ENCODE measurements at regions of chr11 and their contacts with region 1.

Region 1: DNA sequence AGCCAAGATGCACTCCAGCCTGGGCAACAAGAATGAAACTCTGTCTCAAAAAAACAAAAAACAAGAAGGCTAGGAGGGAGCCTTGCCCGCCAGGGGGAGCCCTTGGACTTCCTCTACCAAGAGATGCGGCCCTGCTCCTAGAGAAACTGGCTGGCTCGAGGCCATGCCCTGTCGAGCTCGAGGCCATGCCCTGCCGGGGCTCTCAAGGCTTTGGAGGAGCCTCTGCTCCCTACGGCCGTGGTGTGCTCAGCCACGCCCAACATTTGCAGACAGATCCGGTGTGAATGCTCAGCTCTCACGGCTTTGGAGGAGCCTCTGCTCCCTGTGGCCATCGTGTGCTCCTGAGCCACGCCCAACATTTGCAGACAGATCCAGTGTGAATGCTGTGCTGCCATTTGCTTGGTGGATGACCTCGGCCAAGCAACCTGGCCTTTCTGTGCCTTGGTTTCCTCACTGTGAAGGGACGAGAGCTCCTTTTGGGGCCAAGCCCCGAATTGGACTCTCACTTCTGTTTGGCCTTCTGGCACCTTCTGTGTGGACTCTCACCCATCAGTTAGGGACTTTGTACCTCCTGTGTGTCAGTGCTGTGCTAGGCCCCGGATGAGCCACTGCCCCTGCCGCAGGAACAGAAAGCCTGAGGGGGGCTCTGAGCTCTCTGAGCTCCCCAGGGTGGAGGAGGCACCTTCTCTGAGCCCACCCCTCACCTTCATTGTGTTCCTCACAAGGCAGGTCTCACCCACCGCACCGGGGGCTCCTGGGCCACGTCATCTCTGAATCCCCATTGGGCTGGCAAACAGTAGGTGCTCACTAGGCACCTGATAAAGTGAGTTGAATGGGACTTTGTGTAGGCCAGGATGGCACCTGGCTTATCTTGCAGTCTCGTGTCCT is 14.1 kb downstream of the C11orf24 start:
- DNase-seq: peak; percentile 93
- H3K4me3 ChIP-seq: no peak overlapping the region
- H3K27ac ChIP-seq: no peak overlapping the region
- H3K4me1 ChIP-seq: peaks cover 6% of the 10 kb centered on the region
- CTCF ChIP-seq: peak; percentile 87

Region 2: DNA sequence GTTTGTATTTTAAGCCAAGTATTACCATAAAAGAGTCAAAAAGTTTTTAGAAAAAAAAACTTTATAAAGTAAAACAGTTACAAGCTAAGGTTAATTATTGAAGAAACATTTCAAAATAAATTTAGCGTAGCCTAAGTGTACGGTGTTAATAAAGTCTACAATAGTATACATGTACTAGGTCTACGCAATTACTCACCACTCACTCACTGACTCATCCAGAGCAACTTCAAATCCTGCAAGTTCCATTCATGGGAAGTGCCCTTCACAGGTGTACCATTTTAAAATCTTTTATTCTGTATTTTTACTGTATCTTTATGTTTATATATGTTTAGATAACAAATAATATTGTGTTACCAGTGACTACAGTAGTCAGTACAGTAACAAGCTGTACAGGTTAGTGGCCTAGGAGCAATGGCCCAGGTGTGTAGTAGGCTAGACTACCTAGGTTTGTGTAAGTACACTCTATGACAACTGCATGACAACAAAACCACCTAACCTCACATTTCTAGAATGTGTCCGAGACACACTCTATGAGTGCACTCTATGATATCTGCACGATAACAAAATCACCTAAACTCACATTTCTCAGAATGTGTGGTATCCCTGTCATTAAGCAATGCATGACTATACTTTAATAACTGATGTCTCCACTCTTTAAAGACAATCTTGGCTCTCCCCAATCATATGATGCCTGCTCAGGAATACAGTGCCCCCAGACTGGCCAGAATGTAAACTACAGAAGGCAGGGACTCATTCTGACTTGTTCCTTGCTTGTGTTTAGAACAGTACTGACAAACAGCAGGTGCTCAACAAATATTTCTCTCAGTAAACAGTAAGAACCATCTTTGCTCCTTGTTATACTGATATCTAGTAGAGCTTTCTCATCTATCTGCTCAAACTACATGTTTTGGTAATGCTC is 65.8 kb before region 1 on chr11:
- CTCF ChIA-PET with region 1: no interaction called
- POLR2A ChIA-PET with region 1: no interaction called
- intact Hi-C with region 1: no loop called
- DNase-seq: no peak
- H3K4me3 ChIP-seq: no peak overlapping the region
- H3K27ac ChIP-seq: no peak overlapping the region
- H3K4me1 ChIP-seq: peaks cover 50% of the 10 kb centered on the region
- CTCF ChIP-seq: no peak

Region 3: GRCh38 chr11:68383976-68384501 is 126.3 kb after region 1 on chr11:
- CTCF ChIA-PET with region 1: no interaction called
- POLR2A ChIA-PET with region 1: no interaction called
- intact Hi-C with region 1: loop called (anchors 1 kb)
- DNase-seq: peak; percentile 56
- H3K4me3 ChIP-seq: no peak overlapping the region
- H3K27ac ChIP-seq: no peak overlapping the region
- H3K4me1 ChIP-seq: peaks cover 24% of the 10 kb centered on the region
- CTCF ChIP-seq: peak; percentile 99

Region 4: DNA sequence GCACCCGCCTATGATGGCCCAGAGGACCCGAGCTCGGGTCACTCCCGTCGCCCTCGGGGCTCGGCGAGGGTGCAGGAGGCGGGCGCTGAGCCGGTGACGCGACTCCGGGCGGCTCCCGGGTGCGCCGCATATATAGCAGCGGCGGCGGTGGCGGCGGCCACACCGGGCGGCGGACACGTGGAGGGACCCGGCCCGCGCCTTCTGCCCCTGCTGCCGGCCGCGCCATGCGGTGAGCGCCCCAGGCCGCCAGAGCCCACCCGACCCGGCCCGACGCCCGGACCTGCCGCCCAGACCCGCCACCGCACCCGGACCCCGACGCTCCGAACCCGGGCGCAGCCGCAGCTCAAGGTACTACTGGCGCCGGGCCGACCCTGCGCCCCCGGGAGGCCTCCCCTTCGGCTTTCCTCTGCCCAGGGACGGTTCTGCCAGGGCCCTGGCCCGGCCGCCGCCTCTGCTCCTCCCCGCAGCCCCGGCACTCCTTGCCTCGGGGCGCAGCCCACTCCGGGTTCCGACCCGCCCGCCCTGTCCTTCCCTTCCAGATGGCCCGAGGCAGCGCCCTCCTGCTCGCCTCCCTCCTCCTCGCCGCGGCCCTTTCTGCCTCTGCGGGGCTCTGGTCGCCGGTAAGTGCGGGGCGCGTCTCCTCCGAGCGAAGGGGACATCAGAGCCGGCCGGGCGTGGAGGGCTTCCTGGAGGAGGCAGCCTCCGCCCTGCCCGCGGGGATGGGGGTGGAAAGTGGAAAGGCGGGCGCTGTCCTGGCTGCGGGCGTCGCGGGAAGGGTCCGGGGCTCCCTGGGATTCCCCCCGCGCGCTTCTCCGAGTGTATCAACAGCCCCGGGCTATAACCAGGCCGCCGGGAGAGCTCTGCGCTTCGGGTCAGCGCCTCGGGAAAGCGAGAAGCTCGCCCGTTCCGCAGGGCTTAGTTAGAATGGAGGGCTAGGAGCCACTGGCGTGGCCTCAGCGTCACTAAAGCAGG is 427.0 kb after region 1 on chr11 and contains the start of gene GAL:
- CTCF ChIA-PET with region 1: no interaction called
- POLR2A ChIA-PET with region 1: no interaction called
- intact Hi-C with region 1: no loop called
- DNase-seq: no peak
- H3K4me3 ChIP-seq: no peak within 1 kb of the TSS
- H3K27ac ChIP-seq: no peak within 1 kb of the TSS
- H3K4me1 ChIP-seq: no peaks in the 10 kb centered on the region
- CTCF ChIP-seq: no peak
- total RNA-seq, gene GAL: not detected in 2 replicates

Measured in OCI-LY7 (cell line).